ENCODE measurements at regions of chr17 and their contacts with region 1.

Region 1: GRCh38 chr17:68205251-68205807 is 42.5 kb upstream of the AMZ2 start:
- DNase-seq: peak; percentile 64 to 95
- H3K4me3 ChIP-seq: peak overlapping the region; percentile 89 to 91
- H3K27ac ChIP-seq: peak overlapping the region; percentile 64 to 74
- H3K4me1 ChIP-seq: peaks cover 6 to 11% of the 10 kb centered on the region in 2 donors
- H3K27me3 ChIP-seq: peaks cover 4% of the 10 kb centered on the region
- CTCF ChIP-seq: peak; percentile 70 to 86 (median 75)

Region 2: GRCh38 chr17:67376737-67377487 is 828.4 kb before region 1 on chr17 and contains the start of gene PITPNC1:
- intact Hi-C with region 1: loop called (anchors 5 kb)
- DNase-seq: peak; percentile 49 to 92
- H3K4me3 ChIP-seq: peak within 1 kb of the TSS; percentile 91 to 94
- H3K27ac ChIP-seq: peak within 1 kb of the TSS; percentile 88 to 95
- H3K4me1 ChIP-seq: peaks cover 0 to 16% of the 10 kb centered on the region in 2 donors
- H3K27me3 ChIP-seq: no peaks in the 10 kb centered on the region
- CTCF ChIP-seq: peak in 1 of 3 experiments; percentile 30
- total RNA-seq, gene PITPNC1: 10.9 TPM

Region 3: DNA sequence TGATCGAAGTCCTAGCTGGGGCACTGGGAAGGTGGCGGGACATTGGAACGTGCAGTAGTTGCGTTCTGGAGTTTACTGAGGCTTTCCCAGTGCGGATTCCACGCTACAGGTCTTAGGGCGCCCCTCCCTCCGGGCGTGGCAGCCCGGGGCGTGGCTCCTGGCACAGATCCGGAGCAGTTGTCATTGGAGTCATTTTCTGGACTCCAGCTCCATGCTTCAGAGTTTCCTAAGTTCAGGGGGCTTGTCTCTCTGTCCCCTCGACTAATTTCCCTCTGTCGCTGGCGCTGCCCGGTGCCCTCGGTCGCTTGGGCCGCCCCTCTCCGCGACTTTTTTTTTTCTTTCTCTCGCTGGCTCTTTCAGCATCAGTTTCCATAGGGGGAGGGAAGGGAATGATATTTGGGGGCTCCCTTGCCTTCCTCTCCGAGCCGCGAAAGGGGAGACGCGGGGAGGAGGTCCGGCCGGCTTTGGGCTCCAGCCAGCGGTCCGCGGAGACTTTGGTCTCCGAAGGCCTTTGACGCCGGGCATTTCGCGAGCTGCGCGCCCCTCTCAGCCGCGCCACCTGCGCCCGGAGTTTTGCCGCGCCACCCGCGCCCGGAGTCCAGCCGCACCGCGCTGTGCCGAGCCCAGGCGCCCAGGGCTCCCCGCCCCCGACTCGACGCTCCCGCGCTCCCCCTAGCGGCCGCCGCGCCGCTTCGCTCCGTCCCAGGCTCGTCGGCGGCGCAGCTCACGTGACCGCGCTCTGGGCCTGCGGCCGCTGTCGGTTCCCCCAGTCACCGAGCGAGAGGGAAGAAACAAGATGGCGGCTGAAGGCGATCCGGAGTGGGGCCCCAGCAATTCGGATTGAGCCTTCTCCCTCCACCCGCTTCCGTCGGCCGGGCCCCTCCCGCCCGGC is 380.3 kb before region 1 on chr17 and contains the start of gene BPTF:
- intact Hi-C with region 1: loop called (anchors 10 kb)
- DNase-seq: peak; percentile 46 to 93
- H3K4me3 ChIP-seq: peak within 1 kb of the TSS; percentile 88 to 99
- H3K27ac ChIP-seq: peak within 1 kb of the TSS; percentile 85 to 99
- H3K4me1 ChIP-seq: peaks cover 0 to 15% of the 10 kb centered on the region in 2 donors
- H3K27me3 ChIP-seq: no peaks in the 10 kb centered on the region
- CTCF ChIP-seq: peak; percentile 72 to 98 (median 86)
- total RNA-seq, gene BPTF: 67.4 TPM

Region 4: DNA sequence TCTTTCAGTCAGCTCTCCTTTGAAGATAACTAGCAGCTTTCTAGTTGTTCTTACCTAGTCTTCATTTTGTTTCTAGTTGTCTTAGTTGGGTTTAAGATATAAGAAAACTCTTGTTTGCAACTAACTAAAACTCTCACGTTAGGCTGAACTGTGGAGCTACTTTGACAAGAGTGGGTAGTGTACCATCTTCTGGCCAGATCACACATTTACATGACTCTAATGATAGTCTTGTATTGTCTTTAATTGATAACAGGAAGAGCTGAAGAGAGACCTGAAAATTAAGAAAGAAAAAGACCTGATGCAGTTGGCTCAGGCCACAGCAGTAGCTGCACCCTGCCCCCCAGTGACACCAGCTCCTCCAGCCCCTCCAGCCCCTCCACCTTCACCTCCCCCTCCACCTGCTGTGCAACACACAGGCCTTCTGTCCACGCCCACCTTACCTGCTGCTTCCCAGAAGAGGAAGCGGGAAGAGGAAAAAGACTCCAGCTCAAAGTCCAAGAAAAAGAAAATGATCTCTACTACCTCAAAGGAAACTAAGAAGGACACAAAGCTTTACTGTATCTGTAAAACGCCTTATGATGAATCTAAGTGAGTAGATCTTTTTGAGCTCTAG is 245.9 kb before region 1 on chr17:
- intact Hi-C with region 1: loop called (anchors 10 kb)
- DNase-seq: no peak
- H3K4me3 ChIP-seq: no peak overlapping the region
- H3K27ac ChIP-seq: no peak overlapping the region
- H3K4me1 ChIP-seq: no peaks in the 10 kb centered on the region
- H3K27me3 ChIP-seq: no peaks in the 10 kb centered on the region
- CTCF ChIP-seq: no peak

Region 5: GRCh38 chr17:68035523-68036303 is 169.6 kb before region 1 on chr17 and contains the start of gene KPNA2:
- intact Hi-C with region 1: no loop called
- DNase-seq: peak; percentile 78 to 95
- H3K4me3 ChIP-seq: peak within 1 kb of the TSS; percentile 90 to 97
- H3K27ac ChIP-seq: peak within 1 kb of the TSS; percentile 64 to 76
- H3K4me1 ChIP-seq: peaks cover 0 to 7% of the 10 kb centered on the region in 2 donors
- H3K27me3 ChIP-seq: no peaks in the 10 kb centered on the region
- CTCF ChIP-seq: no peak
- total RNA-seq, gene KPNA2: 11.6 TPM

Region 6: GRCh38 chr17:68061504-68062313 is 143.6 kb before region 1 on chr17:
- intact Hi-C with region 1: no loop called
- DNase-seq: peak in 1 of 2 donors; percentile 45
- H3K4me3 ChIP-seq: no peak overlapping the region
- H3K27ac ChIP-seq: no peak overlapping the region
- H3K4me1 ChIP-seq: no peaks in the 10 kb centered on the region
- H3K27me3 ChIP-seq: no peaks in the 10 kb centered on the region
- CTCF ChIP-seq: no peak

Region 7: GRCh38 chr17:68172461-68172954 is 32.8 kb before region 1 on chr17:
- intact Hi-C with region 1: loop called (anchors 2 kb)
- DNase-seq: peak in 1 of 2 donors; percentile 83
- H3K4me3 ChIP-seq: no peak overlapping the region
- H3K27ac ChIP-seq: no peak overlapping the region
- H3K4me1 ChIP-seq: no peaks in the 10 kb centered on the region
- H3K27me3 ChIP-seq: no peaks in the 10 kb centered on the region
- CTCF ChIP-seq: peak; percentile 89 to 96 (median 94)

Region 8: GRCh38 chr17:68247445-68248198 is 42.3 kb after region 1 on chr17 and contains the start of gene AMZ2:
- intact Hi-C with region 1: loop called (anchors 2 kb)
- DNase-seq: peak; percentile 72 to 95
- H3K4me3 ChIP-seq: peak within 1 kb of the TSS; percentile 83 to 90
- H3K27ac ChIP-seq: peak within 1 kb of the TSS; percentile 96 to 97
- H3K4me1 ChIP-seq: peaks cover 0 to 14% of the 10 kb centered on the region in 2 donors
- H3K27me3 ChIP-seq: no peaks in the 10 kb centered on the region
- CTCF ChIP-seq: no peak
- total RNA-seq, gene AMZ2: 41.6 TPM

Region 9: DNA sequence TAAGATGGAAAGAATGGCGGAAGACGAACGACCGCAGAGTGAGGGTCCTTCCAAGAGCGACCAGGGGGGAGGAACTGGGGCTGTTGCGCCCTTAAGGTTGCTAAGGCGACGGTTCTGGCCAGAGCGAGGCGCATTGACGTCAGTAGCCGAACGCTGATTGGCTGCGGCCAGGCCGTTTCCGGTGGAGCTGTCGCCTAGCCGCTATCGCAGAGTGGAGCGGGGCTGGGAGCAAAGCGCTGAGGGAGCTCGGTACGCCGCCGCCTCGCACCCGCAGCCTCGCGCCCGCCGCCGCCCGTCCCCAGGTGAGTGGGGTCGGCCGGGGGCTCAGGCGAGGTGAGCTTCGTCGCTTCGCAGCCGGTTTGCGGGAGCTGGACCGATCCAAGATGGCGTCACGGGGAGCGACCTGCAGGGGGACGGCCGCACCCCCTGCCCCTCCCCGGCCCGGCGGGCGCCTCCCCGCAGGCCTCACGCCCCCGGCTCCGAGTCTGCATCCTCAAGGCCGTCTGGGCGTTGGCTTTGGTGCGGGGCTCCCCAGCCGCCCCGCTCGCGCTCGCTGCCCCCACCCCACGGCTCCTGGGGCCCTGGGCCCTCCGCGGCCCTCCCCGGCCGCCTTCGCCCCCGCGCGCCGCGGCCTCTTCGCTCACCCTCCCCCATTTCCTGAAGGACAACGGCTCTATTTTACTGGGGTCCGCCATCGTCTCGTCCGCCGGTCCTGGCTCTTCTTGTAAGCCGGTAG is 307.1 kb after region 1 on chr17 and contains the start of gene PRKAR1A:
- intact Hi-C with region 1: loop called (anchors 5 kb)
- DNase-seq: peak; percentile 78 to 96
- H3K4me3 ChIP-seq: peak within 1 kb of the TSS; percentile 88 to 100
- H3K27ac ChIP-seq: peak within 1 kb of the TSS; percentile 96
- H3K4me1 ChIP-seq: peaks cover 0 to 25% of the 10 kb centered on the region in 2 donors
- H3K27me3 ChIP-seq: no peaks in the 10 kb centered on the region
- CTCF ChIP-seq: peak in 1 of 3 experiments; percentile 11
- total RNA-seq, gene PRKAR1A: 233 TPM

Measured in ascending aorta (tissue), 2 donors.